ENCODE measurements at regions of chr1 and their contacts with region 1.

Region 1: GRCh38 chr1:159804924-159805323 is 2.8 kb downstream of the FCRL6 start:
- DNase-seq: no peak
- ATAC-seq: no peak
- H3K4me3 Mint-ChIP-seq: no peak overlapping the region
- H3K27ac Mint-ChIP-seq: no peak overlapping the region
- H3K4me1 Mint-ChIP-seq: peaks cover 21% of the 10 kb centered on the region
- H3K27me3 Mint-ChIP-seq: peaks cover 42% of the 10 kb centered on the region

Region 2: DNA sequence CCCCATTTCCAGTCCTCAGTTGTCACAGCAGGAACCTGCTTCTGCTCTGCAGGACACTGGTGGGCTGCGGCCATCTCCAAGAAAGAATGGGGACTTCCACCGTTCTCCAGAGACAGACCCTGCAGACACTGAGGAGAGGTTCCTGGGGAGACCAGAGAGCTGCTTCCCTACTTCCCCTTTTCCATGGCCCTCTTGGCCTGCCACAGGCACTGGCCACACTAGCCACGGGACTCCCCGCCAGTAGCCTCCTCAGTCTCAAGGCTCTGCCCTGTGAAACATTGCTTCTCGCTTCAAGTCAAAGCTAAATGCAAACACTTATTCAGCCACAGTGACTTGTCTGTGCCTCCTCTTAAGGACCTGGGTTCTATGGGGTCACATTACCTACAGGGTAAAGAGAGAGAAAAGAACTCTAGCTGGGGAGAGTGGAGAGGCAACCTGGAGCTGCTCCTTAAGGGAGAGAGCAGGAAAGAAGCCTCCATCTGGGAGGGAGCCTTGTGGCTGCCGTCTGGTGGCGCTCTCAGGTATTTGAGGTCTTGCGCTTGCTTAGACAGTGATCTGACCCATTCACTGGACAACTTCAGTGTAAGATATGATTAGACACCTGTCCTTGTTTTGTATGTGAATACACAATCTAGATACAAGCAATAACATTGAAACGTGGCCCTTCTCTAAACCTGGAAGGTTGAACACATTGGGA is 16.4 kb after region 1 on chr1:
- CTCF ChIA-PET with region 1: interaction called, 71 read pairs
- DNase-seq: no peak
- ATAC-seq: no peak
- H3K4me3 Mint-ChIP-seq: no peak overlapping the region
- H3K27ac Mint-ChIP-seq: no peak overlapping the region
- H3K4me1 Mint-ChIP-seq: peaks cover 24% of the 10 kb centered on the region
- H3K27me3 Mint-ChIP-seq: peaks cover 47% of the 10 kb centered on the region